Activated CD4-positive, alpha-beta memory T cell treated with anti-CD3 and anti-CD28 coated beads, Interleukin-2, amount 10 ng/mL, durations not matched to agents 7 days and 5 days (primary cell): ENCODE measurements at regions of chr1 and their contacts with region 1.

Region 1: GRCh38 chr1:156500797-156501499 is 373 bp upstream of the MEF2D start:
- DNase-seq: peak; percentile 93
- H3K4me3 Mint-ChIP-seq: peak overlapping the region; percentile 87
- H3K27ac Mint-ChIP-seq: peak overlapping the region; percentile 97
- H3K4me1 Mint-ChIP-seq: peaks cover 74% of the 10 kb centered on the region
- H3K27me3 Mint-ChIP-seq: no peaks in the 10 kb centered on the region

Region 2: GRCh38 chr1:156338180-156338973 is 162.6 kb before region 1 on chr1 and contains the starts of genes CCT3 and TSACC:
- CTCF ChIA-PET with region 1: no interaction called
- POLR2A ChIA-PET with region 1: no interaction called
- DNase-seq: peak; percentile 99
- H3K4me3 Mint-ChIP-seq: peak within 1 kb of the TSS; percentile 98
- H3K27ac Mint-ChIP-seq: peak within 1 kb of the TSS; percentile 95
- H3K4me1 Mint-ChIP-seq: peaks cover 39% of the 10 kb centered on the region
- H3K27me3 Mint-ChIP-seq: peaks cover 2% of the 10 kb centered on the region
- total RNA-seq, gene CCT3: 181 to 184 TPM
- total RNA-seq, gene TSACC: 0.65 TPM in 1 of 2 experiments, not detected in the other

Region 3: DNA sequence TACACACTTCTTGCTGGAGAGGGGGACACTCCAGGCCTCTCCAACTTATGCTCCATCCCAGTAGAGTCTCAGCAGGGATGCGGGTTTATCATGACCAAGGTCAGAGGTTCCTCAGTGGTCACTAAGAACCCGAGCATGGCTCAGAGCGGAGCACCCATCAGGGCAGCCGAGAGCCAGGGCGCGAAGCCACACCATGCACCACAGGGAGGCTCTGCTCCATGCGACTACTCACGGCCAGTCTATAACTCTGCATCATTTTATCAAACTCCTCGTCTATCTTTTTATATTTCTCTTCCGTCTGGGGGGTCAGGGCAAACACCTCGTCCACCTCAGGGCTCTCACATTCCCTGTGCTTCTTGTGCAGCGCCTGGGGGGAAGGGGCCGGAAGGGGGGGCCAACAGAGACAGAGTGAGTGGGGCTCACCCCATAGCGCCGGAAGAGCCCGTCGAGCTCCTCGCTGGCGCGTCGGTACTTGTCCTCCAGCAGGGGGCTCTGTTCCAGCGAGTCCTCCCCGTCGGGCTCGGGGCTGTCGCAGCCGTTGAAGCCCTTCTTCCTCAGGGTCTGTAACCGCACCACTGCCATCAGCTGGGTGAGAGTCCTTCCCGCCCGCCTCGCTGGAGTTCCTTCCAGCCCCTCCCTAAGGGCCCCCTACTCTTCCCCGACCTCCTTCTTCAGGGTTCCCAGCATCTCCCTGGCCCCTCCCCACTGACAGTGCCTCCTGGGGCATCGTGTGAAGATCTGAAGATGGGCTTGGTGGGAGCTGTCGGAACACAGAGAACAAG is 20.3 kb before region 1 on chr1:
- CTCF ChIA-PET with region 1: interaction called, 48 read pairs
- POLR2A ChIA-PET with region 1: interaction called, 286 read pairs
- DNase-seq: peak; percentile 74
- H3K4me3 Mint-ChIP-seq: no peak overlapping the region
- H3K27ac Mint-ChIP-seq: peak overlapping the region; percentile 53
- H3K4me1 Mint-ChIP-seq: peaks cover 51% of the 10 kb centered on the region
- H3K27me3 Mint-ChIP-seq: no peaks in the 10 kb centered on the region

Region 4: DNA sequence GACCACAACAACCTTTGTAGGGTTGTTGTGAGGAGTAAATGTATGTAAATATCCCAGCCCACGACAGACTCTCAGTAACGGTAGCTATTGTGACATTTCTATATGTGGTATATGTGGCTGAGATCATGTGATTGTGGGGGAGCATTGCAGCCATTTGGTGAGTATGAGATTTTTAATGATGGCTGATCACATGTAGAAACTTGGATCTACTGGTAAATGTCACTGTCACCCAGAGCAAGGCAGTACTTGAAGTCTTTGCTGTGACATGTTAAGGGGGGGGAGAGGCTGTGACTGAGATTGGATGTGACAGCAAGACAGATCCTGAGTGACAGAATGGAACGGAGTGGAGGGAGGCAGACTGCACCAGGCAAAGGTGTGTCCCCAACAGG is 23.5 kb after region 1 on chr1:
- CTCF ChIA-PET with region 1: interaction called, 16 read pairs
- POLR2A ChIA-PET with region 1: interaction called, 22 read pairs
- DNase-seq: no peak
- H3K4me3 Mint-ChIP-seq: no peak overlapping the region
- H3K27ac Mint-ChIP-seq: peak overlapping the region; percentile 38
- H3K4me1 Mint-ChIP-seq: peaks cover 35% of the 10 kb centered on the region
- H3K27me3 Mint-ChIP-seq: peaks cover 3% of the 10 kb centered on the region

Region 5: GRCh38 chr1:156591432-156592157 is 90.6 kb after region 1 on chr1 and contains the start of gene NAXE:
- CTCF ChIA-PET with region 1: interaction called, 7 read pairs
- POLR2A ChIA-PET with region 1: interaction called, 29 read pairs
- DNase-seq: peak; percentile 73
- H3K4me3 Mint-ChIP-seq: peak within 1 kb of the TSS; percentile 79
- H3K27ac Mint-ChIP-seq: peak within 1 kb of the TSS; percentile 76
- H3K4me1 Mint-ChIP-seq: peaks cover 35% of the 10 kb centered on the region
- H3K27me3 Mint-ChIP-seq: no peaks in the 10 kb centered on the region
- total RNA-seq, gene NAXE: 45.3 to 46.1 TPM

Region 6: GRCh38 chr1:156659994-156660751 is 159.2 kb after region 1 on chr1:
- CTCF ChIA-PET with region 1: interaction called, 5 read pairs
- POLR2A ChIA-PET with region 1: interaction called, 11 read pairs
- DNase-seq: peak; percentile 95
- H3K4me3 Mint-ChIP-seq: peak overlapping the region; percentile 83
- H3K27ac Mint-ChIP-seq: peak overlapping the region; percentile 86
- H3K4me1 Mint-ChIP-seq: peaks cover 72% of the 10 kb centered on the region
- H3K27me3 Mint-ChIP-seq: peaks cover 30% of the 10 kb centered on the region